ENCODE measurements at regions of chr9 and their contacts with region 1.

Region 1: GRCh38 chr9:69549310-69550202 is 122.6 kb downstream of the APBA1 start:
- DNase-seq: no peak
- ATAC-seq: peak; percentile 52

Region 2: DNA sequence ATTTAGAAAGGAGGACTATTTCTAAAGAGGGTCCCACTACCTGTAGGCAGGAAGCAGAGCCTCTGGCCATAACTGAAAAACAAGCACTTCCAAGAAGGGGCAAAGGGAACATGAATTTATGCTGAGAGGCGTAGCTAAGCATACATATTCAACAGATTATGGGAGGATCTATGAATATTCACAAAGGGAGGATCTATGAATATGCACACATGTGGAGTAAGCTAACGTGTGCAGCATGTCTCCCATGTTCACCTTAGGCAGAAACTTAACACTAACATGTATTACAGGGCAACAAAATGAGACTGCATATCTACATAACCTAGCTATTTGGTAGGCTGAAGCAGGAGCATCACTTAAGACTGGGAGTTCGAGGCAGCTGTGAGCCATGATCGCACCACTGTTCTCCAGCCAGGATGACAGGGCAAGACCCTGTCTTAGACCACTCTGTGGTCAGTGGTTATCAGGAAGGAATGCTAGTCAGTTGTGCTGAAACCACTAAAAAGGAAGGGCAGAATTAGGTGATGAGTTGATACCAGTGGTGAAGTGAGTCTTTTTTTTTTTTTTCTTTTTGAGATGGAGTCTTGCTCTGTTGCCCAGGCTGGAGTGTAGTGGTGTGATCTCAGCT is 493.3 kb before region 1 on chr9:
- intact Hi-C with region 1: loop called (anchors 10 kb)
- DNase-seq: no peak
- ATAC-seq: no peak

Region 3: GRCh38 chr9:69421908-69422801 is 127.4 kb before region 1 on chr9:
- intact Hi-C with region 1: loop called (anchors 1 kb)
- DNase-seq: no peak
- ATAC-seq: peak; percentile 80

Region 4: GRCh38 chr9:69444021-69444420 is 105.5 kb before region 1 on chr9:
- intact Hi-C with region 1: no loop called
- DNase-seq: no peak
- ATAC-seq: no peak

Region 5: DNA sequence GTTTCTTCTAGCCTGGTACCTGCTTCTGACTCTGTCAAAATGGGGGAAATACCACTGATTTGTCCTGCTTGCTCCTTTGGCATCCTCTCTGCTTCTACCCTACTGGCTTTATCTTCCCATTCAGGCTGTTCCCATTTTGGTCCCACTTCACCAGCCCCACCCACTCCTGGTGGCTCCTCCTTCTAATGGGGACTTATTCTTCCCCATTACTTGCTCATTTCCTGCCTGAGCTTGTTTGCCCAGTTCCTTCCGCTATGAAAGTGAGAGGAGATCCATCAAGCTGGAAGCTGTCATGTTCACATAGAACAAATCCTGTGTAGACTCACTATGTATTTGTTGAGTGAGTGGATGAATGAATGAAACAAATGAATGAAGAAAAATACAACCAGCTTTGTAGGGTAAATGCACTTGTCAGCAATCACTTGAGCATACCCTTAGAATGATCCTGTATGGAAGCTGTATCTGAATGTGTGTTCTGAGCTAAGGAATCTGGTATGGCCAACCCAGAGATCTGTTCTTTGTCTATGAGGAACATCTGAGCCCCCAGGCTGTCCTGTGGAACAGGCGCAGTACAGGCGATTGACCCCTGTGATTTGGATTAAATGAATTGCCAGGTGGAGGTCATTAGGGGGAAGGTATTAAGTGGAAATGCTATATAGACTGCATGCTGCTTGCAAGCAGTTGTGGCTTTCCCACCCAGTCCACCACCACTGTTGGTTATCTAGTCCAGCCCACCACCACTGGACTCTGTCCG is 33.2 kb after region 1 on chr9:
- intact Hi-C with region 1: no loop called
- DNase-seq: no peak
- ATAC-seq: no peak

Region 6: DNA sequence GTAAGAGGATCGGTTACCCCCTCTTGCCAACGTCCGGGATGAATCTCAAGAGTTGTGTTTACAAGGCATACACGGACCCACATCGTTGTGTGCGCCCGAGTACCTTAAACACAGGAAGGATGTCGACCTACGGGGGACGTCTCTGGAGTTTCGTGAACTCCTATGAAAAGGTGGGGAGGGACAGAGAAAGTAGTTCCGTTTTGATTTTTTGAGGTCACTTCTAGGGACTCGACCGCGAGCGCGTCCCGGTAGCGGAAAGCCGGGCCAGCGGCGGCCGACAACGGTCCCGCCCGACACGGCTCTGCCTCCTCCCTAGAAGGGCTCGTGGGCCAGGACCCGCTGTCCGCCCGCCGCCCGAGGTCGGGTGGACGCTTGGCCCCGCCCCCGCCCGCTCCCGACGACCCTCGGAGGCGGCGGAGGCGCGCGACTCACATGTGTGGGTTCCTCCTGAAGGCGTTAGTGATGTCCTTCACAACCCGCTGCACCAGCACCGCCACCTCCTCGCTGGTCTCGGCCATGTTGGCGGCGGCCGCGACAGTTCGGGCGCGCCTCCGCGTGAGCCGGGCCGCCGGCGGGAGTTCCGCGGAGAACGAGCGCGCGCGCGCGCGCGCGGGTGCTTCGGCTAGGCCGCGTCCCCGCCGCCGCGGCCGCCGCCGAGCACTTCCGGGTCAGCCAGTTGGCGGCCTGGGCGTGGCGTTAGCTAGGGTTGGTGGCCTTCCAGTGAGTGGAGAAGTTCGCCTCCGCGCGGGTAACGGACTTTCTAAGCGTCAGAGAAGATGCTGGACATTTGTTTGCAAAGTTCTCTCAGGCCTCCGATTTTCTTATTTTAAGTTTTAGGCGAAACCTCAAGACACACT is 210.1 kb after region 1 on chr9 and contains the start of gene PTAR1:
- intact Hi-C with region 1: loop called (anchors 10 kb)
- DNase-seq: peak; percentile 97
- ATAC-seq: peak; percentile 98
- total RNA-seq, gene PTAR1: 24.2 TPM

Region 7: GRCh38 chr9:69794356-69794755 is 244.8 kb after region 1 on chr9:
- intact Hi-C with region 1: no loop called
- DNase-seq: no peak
- ATAC-seq: no peak

Region 8: GRCh38 chr9:69877854-69878514 is 328.4 kb after region 1 on chr9:
- intact Hi-C with region 1: loop called (anchors 10 kb)
- DNase-seq: no peak
- ATAC-seq: peak; percentile 56

Measured in Right ventricle myocardium inferior (tissue), 1 donor.